Common myeloid progenitor, CD34-positive (primary cell): ENCODE measurements at regions of chr1 and their contacts with region 1.

Region 1: GRCh38 chr1:204128964-204129896 is 22.6 kb downstream of the ETNK2 start:
- DNase-seq: peak; percentile 49 to 74 (median 61)
- H3K4me3 ChIP-seq: peak overlapping the region in 4 of 7 experiments; percentile 26 to 55 (median 28)
- H3K27ac ChIP-seq: no peak overlapping the region
- H3K4me1 ChIP-seq: peaks cover 0 to 9% (median 6%) of the 10 kb centered on the region in 4 experiments
- H3K27me3 ChIP-seq: no peaks in the 10 kb centered on the region

Region 2: GRCh38 chr1:203861379-203862184 is 267.6 kb before region 1 on chr1 and contains the start of gene SNRPE:
- CTCF ChIA-PET with region 1: interaction called, 53 read pairs
- POLR2A ChIA-PET with region 1: no interaction called
- DNase-seq: peak; percentile 99 to 100 (median 99)
- H3K4me3 ChIP-seq: peak within 1 kb of the TSS; percentile 79 to 98 (median 94)
- H3K27ac ChIP-seq: peak within 1 kb of the TSS; percentile 67 to 82
- H3K4me1 ChIP-seq: peaks cover 6 to 17% (median 8%) of the 10 kb centered on the region in 4 experiments
- H3K27me3 ChIP-seq: no peaks in the 10 kb centered on the region

Region 3: GRCh38 chr1:203871107-203871875 is 257.9 kb before region 1 on chr1:
- CTCF ChIA-PET with region 1: interaction called, 322 read pairs
- POLR2A ChIA-PET with region 1: no interaction called
- DNase-seq: peak; percentile 69 to 84 (median 82)
- H3K4me3 ChIP-seq: no peak overlapping the region
- H3K27ac ChIP-seq: no peak overlapping the region
- H3K4me1 ChIP-seq: no peaks in the 10 kb centered on the region
- H3K27me3 ChIP-seq: no peaks in the 10 kb centered on the region

Region 4: DNA sequence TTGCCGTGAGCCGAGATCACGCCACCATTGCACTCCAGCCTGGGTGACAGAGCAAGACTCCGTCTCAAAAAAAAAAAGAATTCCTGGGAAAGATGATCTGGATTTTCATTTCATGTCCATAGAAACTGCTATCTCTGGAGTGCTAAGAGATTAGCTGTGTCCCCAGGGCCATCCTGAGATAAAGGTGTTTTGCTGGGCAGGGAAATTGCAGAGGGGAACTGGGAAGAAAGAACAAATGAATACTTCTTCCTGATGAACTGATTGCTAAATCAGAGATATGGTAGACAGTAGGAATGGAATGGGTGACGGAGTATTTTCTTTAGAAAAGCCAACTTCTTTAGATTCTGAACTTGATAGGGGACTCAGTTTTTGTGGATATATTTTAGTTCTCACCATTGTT is 248.6 kb before region 1 on chr1:
- CTCF ChIA-PET with region 1: interaction called, 322 read pairs
- POLR2A ChIA-PET with region 1: no interaction called
- DNase-seq: no peak
- H3K4me3 ChIP-seq: no peak overlapping the region
- H3K27ac ChIP-seq: no peak overlapping the region
- H3K4me1 ChIP-seq: no peaks in the 10 kb centered on the region
- H3K27me3 ChIP-seq: no peaks in the 10 kb centered on the region

Region 5: GRCh38 chr1:204142032-204142974 is 13.1 kb after region 1 on chr1:
- CTCF ChIA-PET with region 1: interaction called, 36 read pairs
- POLR2A ChIA-PET with region 1: no interaction called
- DNase-seq: no peak
- H3K4me3 ChIP-seq: no peak overlapping the region
- H3K27ac ChIP-seq: no peak overlapping the region
- H3K4me1 ChIP-seq: no peaks in the 10 kb centered on the region
- H3K27me3 ChIP-seq: no peaks in the 10 kb centered on the region